ENCODE measurements at regions of chr11 and their contacts with region 1.

Region 1: DNA sequence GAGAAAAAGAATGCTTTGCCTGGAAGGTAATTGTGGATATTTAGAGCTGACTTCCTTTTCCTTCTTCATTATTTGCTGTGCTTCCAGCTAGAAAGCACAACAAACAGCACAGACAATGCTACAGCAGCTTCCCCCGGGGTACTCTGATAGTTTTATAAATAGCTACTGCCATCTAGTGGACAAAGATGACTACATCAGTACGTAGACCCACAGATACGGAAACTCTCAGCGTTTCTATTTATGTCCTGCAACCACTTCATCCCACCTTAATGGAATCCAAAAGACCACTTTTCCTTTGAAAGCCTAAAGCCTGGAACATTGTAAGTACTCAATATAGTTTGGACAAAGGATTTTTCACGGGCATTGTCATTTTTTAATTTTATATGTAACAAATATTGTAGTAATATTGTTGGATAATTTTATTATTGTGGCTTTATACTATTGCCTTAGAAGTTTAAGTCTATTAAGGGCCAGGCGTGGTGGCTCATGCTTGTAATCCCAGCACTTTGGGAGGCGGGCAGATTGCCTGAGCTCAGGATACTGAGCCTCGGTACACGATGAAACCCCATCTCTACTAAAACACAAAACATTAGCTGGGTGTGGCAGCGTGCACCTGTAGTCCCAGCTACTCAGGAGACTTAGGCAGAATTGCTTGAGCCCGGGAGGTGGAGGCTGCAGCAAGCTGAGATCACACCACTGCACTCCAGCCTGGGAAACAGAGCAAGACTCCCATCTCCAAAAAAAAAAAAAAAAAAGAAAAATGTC is 7.5 kb downstream of the HSPA8 start:
- DNase-seq: no peak
- ATAC-seq: peak; percentile 76
- H3K4me3 Mint-ChIP-seq: no peak overlapping the region
- H3K27ac Mint-ChIP-seq: peak overlapping the region; percentile 97
- H3K4me1 Mint-ChIP-seq: peaks cover 32% of the 10 kb centered on the region
- H3K27me3 Mint-ChIP-seq: no peaks in the 10 kb centered on the region

Region 2: DNA sequence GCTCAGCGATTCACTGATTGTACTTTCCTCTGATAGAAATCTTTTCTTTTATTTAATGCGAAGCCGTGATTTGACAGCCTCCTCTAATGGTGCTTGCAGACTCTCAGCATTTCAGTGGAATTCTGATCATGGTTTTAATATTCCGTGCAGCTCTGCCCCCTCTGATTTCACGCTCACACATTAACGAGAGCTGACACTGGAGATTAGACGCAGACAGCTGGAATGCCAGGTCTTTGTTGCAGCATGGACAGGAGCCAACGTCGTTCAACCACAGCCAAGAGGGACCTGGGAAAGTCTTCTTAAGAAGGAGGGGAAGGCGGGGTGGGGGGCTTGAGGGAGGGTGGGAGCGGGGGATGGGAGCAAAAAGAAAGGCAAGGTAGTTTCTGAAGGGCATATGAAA is 1124.9 kb before region 1 on chr11:
- CTCF ChIA-PET with region 1: no interaction called
- POLR2A ChIA-PET with region 1: no interaction called
- intact Hi-C with region 1: no loop called
- DNase-seq: no peak
- ATAC-seq: no peak
- H3K4me3 Mint-ChIP-seq: no peak overlapping the region
- H3K27ac Mint-ChIP-seq: no peak overlapping the region
- H3K4me1 Mint-ChIP-seq: no peaks in the 10 kb centered on the region
- H3K27me3 Mint-ChIP-seq: peaks cover 27% of the 10 kb centered on the region

Region 3: GRCh38 chr11:122910775-122911174 is 143.7 kb before region 1 on chr11:
- CTCF ChIA-PET with region 1: interaction called, 3 read pairs
- POLR2A ChIA-PET with region 1: no interaction called
- intact Hi-C with region 1: loop called in 1 of 2 experiments (anchors 1 kb)
- DNase-seq: peak; percentile 19
- ATAC-seq: no peak
- H3K4me3 Mint-ChIP-seq: no peak overlapping the region
- H3K27ac Mint-ChIP-seq: no peak overlapping the region
- H3K4me1 Mint-ChIP-seq: no peaks in the 10 kb centered on the region
- H3K27me3 Mint-ChIP-seq: no peaks in the 10 kb centered on the region

Region 4: GRCh38 chr11:122954455-122954854 is 100.0 kb before region 1 on chr11:
- CTCF ChIA-PET with region 1: no interaction called
- POLR2A ChIA-PET with region 1: no interaction called
- intact Hi-C with region 1: no loop called
- DNase-seq: no peak
- ATAC-seq: no peak
- H3K4me3 Mint-ChIP-seq: no peak overlapping the region
- H3K27ac Mint-ChIP-seq: no peak overlapping the region
- H3K4me1 Mint-ChIP-seq: peaks cover 3% of the 10 kb centered on the region
- H3K27me3 Mint-ChIP-seq: no peaks in the 10 kb centered on the region

Region 5: DNA sequence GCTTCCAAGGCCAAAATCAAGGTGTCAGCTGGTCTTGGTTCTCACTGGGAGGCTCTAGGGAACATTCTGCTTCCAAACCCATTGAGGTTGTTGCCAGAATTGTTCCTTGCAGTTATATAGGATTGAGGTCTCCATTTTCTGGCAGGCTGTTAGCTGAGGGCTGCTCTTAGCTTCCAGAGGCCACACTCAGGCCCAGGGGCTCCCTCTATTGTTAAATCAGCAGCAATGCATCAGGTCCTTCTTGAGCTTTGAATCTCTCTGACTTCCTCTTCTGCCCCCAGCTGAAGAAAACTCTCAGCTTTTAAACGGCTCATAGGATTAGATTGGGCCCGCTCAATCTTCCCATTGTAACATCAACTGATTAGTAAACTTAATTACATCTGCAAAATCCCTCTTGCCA is 33.5 kb before region 1 on chr11:
- CTCF ChIA-PET with region 1: interaction called, 38 read pairs
- POLR2A ChIA-PET with region 1: interaction called, 4 read pairs
- intact Hi-C with region 1: loop called in 1 of 2 experiments (anchors 1 kb)
- DNase-seq: peak; percentile 58
- ATAC-seq: peak; percentile 91
- H3K4me3 Mint-ChIP-seq: no peak overlapping the region
- H3K27ac Mint-ChIP-seq: no peak overlapping the region
- H3K4me1 Mint-ChIP-seq: peaks cover 2% of the 10 kb centered on the region
- H3K27me3 Mint-ChIP-seq: peaks cover 2% of the 10 kb centered on the region

Region 6: DNA sequence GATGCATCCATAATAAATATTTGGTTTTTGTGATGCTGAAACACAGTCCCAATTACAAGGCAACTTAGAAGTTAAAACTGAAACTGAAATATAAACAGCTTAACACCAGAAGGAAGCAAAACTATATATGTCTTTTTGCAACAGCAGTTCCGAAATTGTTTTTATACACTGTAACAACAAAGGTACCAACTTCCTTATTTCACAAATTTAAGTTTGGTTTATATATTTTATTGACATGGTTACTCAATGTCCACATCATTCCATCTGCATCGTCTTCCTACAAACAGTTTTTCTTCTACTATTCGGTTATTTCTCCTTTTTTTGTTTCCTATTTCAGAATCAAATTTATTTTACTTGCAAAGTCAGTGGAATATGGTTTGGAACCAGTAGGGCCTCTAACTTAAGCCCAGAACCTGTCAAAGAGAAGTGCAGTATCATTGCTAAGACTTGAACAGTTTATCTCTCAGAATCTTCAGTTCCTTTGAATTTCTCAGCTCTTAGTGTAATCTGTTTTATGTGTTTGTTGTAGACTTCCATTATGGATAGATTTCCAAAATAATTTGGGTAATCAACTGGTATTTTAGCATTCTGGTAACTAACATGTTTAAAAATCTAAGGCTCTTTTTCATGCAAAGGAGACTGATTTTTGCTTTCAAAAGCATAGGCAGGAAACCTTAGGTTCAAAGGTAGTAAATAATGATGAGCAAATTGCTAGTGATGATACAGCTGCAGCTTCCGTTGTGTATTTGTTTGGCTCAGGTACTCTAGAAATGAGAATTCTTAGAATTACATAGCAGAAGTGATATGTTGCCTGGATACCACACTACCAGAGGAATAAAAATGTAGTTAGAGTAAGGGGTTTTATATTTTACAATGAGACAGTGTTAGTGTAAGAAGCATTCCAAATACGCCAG is 15.7 kb after region 1 on chr11:
- CTCF ChIA-PET with region 1: interaction called, 33 read pairs
- POLR2A ChIA-PET with region 1: interaction called, 26 read pairs
- intact Hi-C with region 1: no loop called
- DNase-seq: no peak
- ATAC-seq: peak; percentile 79
- H3K4me3 Mint-ChIP-seq: peak overlapping the region; percentile 77
- H3K27ac Mint-ChIP-seq: peak overlapping the region; percentile 94
- H3K4me1 Mint-ChIP-seq: peaks cover 59% of the 10 kb centered on the region
- H3K27me3 Mint-ChIP-seq: no peaks in the 10 kb centered on the region

Region 7: GRCh38 chr11:123729602-123730001 is 675.1 kb after region 1 on chr11:
- CTCF ChIA-PET with region 1: no interaction called
- POLR2A ChIA-PET with region 1: no interaction called
- intact Hi-C with region 1: no loop called
- DNase-seq: no peak
- ATAC-seq: no peak
- H3K4me3 Mint-ChIP-seq: no peak overlapping the region
- H3K27ac Mint-ChIP-seq: no peak overlapping the region
- H3K4me1 Mint-ChIP-seq: no peaks in the 10 kb centered on the region
- H3K27me3 Mint-ChIP-seq: no peaks in the 10 kb centered on the region

Region 8: DNA sequence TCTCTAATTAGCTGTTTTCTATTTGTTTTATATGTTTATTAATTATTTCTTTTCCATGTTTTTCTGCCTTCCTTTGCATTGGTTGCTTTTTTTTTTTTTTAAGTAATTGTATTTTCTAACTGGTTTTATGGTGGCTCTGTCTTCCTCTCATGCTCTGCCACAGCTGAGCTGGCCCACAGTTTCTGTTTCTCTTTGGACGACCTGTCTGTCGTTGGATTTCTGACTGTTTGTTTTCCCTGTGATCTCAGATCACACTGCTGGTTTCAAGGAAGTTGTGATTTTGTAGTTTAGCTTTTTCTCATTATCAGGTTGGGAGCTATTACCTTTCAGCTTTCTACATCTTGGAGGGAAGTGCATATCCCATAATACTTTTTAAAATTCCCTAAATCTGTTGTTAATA is 767.5 kb after region 1 on chr11:
- CTCF ChIA-PET with region 1: no interaction called
- POLR2A ChIA-PET with region 1: no interaction called
- intact Hi-C with region 1: no loop called
- DNase-seq: no peak
- ATAC-seq: no peak
- H3K4me3 Mint-ChIP-seq: no peak overlapping the region
- H3K27ac Mint-ChIP-seq: no peak overlapping the region
- H3K4me1 Mint-ChIP-seq: no peaks in the 10 kb centered on the region
- H3K27me3 Mint-ChIP-seq: peaks cover 11% of the 10 kb centered on the region

Measured in activated CD4-positive, alpha-beta T cell treated with anti-CD3 and anti-CD28 coated beads for 36 hours (primary cell).